MCF 10A (cell line): ENCODE measurements at regions of chr17 and their contacts with region 1.

Region 1: GRCh38 chr17:82292251-82293154 is 19.0 kb upstream of the CSNK1D start:
- DNase-seq: peak; percentile 98
- H3K4me3 Mint-ChIP-seq: peak overlapping the region; percentile 74
- H3K27ac Mint-ChIP-seq: peak overlapping the region; percentile 51
- H3K4me1 Mint-ChIP-seq: peaks cover 35% of the 10 kb centered on the region
- H3K27me3 Mint-ChIP-seq: no peaks in the 10 kb centered on the region
- CTCF ChIP-seq: no peak

Region 2: DNA sequence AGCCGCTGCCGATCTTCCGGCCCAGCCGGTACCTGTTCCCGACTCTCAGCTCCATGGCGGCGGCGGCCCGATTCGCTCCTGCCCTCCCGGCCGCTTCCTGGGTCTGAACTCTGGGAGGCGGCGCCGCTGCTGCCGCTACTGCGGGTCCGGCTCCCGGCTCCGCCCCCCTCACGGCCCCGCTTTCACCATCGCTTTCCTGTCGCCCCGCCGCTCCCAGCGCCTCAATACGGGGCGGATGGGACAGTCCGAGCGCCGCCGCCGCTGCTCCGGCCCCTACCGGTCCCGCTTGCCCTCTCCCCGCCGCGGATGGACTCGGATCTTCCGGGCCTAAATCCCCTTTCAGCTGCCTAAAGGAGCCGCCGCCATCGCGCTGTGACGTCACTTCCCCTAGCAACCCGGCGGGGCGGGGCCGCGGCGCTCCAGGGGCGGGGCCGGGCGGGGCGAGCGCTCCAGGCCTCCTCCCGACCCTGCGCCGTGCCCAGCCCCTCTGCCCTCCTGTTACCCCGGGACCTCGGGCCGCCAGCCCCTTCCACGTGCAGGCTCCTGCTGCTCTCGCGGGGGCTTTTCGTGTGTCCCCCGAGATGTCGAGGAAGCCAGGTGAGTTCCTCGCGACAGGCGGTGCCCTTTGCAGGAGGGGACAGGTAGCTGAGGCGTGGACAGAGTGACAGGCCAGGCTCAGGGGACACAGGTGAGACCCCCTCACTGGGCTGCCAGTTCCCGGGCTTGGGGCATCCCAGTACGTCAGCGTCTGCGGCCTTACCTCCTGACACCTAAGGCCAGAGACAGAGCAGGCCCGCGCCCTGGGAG is 19.0 kb before region 1 on chr17 and contains the start of gene CSNK1D:
- CTCF ChIA-PET with region 1: no interaction called
- POLR2A ChIA-PET with region 1: interaction called, 38 read pairs
- intact Hi-C with region 1: no loop called
- DNase-seq: peak; percentile 88
- H3K4me3 Mint-ChIP-seq: peak within 1 kb of the TSS; percentile 77
- H3K27ac Mint-ChIP-seq: peak within 1 kb of the TSS; percentile 100
- H3K4me1 Mint-ChIP-seq: peaks cover 16% of the 10 kb centered on the region
- H3K27me3 Mint-ChIP-seq: no peaks in the 10 kb centered on the region
- CTCF ChIP-seq: no peak
- total RNA-seq, gene CSNK1D: 191 and 193 TPM in 2 replicates